Activated CD4-positive, alpha-beta T cell treated with anti-CD3 and anti-CD28 coated beads, Interleukin-2, amount 10 ng/mL, durations not matched to agents 7 days and 5 days (primary cell): ENCODE measurements at regions of chr6 and their contacts with region 1.

Region 1: GRCh38 chr6:56902641-56903464 is 52.1 kb upstream of the BEND6 start:
- DNase-seq: no peak
- H3K4me3 Mint-ChIP-seq: no peak overlapping the region
- H3K27ac Mint-ChIP-seq: no peak overlapping the region
- H3K4me1 Mint-ChIP-seq: no peaks in the 10 kb centered on the region
- H3K27me3 Mint-ChIP-seq: peaks cover 20% of the 10 kb centered on the region

Region 2: DNA sequence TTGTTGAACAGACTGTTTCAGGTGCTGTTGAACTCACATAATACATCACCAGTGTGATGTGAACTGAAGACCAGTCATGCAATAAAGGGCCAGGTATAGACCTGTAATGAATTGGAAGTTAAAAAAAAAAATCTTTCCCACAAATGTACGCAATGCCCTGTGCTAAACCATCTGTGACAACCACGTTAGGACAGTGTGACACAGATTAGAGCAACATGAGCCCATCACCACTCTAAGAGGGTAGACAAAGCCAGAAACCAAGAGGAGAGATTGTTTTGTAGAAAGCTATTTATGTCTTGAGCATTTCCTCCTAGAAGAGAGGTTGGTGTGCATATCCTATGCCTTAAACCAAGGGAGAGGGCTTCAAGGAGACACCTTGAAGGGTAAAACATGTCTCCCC is 24.9 kb before region 1 on chr6:
- CTCF ChIA-PET with region 1: no interaction called
- POLR2A ChIA-PET with region 1: no interaction called
- DNase-seq: no peak
- H3K4me3 Mint-ChIP-seq: no peak overlapping the region
- H3K27ac Mint-ChIP-seq: no peak overlapping the region
- H3K4me1 Mint-ChIP-seq: no peaks in the 10 kb centered on the region
- H3K27me3 Mint-ChIP-seq: peaks cover 7% of the 10 kb centered on the region

Region 3: GRCh38 chr6:57316581-57317059 is 413.8 kb after region 1 on chr6:
- CTCF ChIA-PET with region 1: interaction called, 27 read pairs
- POLR2A ChIA-PET with region 1: no interaction called
- DNase-seq: peak; percentile 88
- H3K4me3 Mint-ChIP-seq: peak overlapping the region; percentile 97
- H3K27ac Mint-ChIP-seq: peak overlapping the region; percentile 97
- H3K4me1 Mint-ChIP-seq: peaks cover 39% of the 10 kb centered on the region
- H3K27me3 Mint-ChIP-seq: peaks cover 2% of the 10 kb centered on the region